H1 (cell line): ENCODE measurements at regions of chr2 and their contacts with region 1.

Region 1: DNA sequence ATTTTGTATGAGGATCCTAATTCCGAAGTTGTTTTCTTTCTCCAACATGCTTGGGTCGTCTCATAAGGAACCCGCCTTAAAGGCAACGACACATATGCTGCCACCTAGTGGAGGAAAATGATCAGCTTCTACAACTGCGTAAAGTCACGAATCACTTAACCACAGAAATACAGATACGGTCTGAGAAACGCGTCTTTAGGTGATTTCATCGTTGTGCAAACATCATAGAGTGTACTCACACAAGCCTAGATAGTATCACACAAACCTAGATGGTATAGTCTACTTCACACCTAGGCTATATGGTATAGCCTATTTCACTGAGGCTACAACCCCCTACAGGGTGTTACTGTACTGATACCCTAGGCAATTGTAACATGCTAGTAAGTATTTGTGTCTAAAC is 13.1 kb downstream of the GNLY start:
- DNase-seq: no peak
- H3K4me3 ChIP-seq: no peak overlapping the region
- H3K27ac ChIP-seq: no peak overlapping the region
- H3K4me1 ChIP-seq: peaks cover 0 to 4% (median 1%) of the 10 kb centered on the region in 4 experiments; a peak in 3 of 7 replicates
- H3K27me3 ChIP-seq: no peaks in the 10 kb centered on the region; a peak in 1 of 7 replicates
- CTCF ChIP-seq: peak; percentile 0 to 94 (median 72)
- EP300 ChIP-seq: no peak
- POLR2A ChIP-seq: no peak
- RAD21 ChIP-seq: peak; percentile 65 to 72

Region 2: GRCh38 chr2:85561317-85561979 is 145.9 kb before region 1 on chr2 and contains the start of gene GGCX:
- CTCF ChIA-PET with region 1: no interaction called
- POLR2A ChIA-PET with region 1: no interaction called
- DNase-seq: peak; percentile 88 to 97
- H3K4me3 ChIP-seq: peak within 1 kb of the TSS; percentile 68 to 90 (median 88)
- H3K27ac ChIP-seq: peak within 1 kb of the TSS; percentile 92
- H3K4me1 ChIP-seq: no peaks in the 10 kb centered on the region
- H3K27me3 ChIP-seq: no peaks in the 10 kb centered on the region
- CTCF ChIP-seq: no peak
- EP300 ChIP-seq: no peak
- POLR2A ChIP-seq: peak; percentile 95 to 97
- RAD21 ChIP-seq: peak in 1 of 2 experiments; percentile 11; a peak in 1 of 4 replicates
- total RNA-seq, gene GGCX: 33.8 and 36.1 TPM in 2 replicates

Region 3: GRCh38 chr2:85635636-85636035 is 71.7 kb before region 1 on chr2:
- CTCF ChIA-PET with region 1: interaction called, 24 read pairs
- POLR2A ChIA-PET with region 1: interaction called, 3 read pairs
- DNase-seq: no peak
- H3K4me3 ChIP-seq: no peak overlapping the region
- H3K27ac ChIP-seq: no peak overlapping the region
- H3K4me1 ChIP-seq: no peaks in the 10 kb centered on the region
- H3K27me3 ChIP-seq: no peaks in the 10 kb centered on the region
- CTCF ChIP-seq: no peak
- EP300 ChIP-seq: no peak
- POLR2A ChIP-seq: no peak
- RAD21 ChIP-seq: no peak

Region 4: DNA sequence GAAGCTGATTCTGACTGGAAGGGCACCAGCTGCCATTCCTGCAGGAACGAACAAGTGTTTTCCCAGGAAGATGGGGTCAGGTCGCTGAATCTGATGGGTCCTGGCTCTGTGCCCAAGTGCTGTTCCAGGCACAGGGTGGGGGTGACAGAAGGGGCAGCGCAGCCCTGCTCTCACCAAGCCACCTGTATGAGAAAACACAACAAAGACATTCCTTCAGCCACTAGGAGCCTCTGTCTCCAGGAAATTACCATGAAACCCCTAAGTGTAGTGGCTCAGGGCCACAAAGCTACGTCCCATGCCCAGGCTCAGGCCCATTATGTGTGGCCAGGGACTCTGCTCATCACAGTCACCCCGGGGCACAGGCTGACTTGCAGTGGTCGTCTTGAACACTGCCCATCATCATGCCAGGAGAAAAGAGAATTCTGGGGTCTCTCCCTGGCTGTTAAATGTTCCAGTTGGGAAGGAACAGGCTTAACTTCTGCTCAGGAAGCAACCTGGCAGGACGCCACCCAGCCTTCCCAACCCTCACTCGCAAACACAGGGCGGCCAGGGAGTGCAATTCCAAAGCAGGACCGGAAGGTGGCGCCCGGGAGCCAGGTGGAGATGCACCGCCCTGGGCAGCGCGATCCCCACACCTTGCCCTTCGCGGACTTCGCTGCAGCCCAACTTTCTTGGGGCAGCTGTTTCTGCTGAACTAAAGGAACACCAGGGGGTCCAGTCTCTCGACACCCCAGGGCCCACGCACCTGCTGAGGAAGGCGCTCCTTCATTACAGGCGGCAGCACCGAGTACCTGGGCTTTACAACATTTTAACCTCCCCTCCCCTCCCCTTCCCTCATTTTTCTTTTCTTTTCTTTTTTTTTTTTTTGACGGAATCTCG is 28.3 kb before region 1 on chr2:
- CTCF ChIA-PET with region 1: interaction called, 80 read pairs
- POLR2A ChIA-PET with region 1: interaction called, 10 read pairs
- DNase-seq: peak; percentile 38 to 97
- H3K4me3 ChIP-seq: peak overlapping the region in 1 of 4 experiments; percentile 45; a peak in 1 of 8 replicates
- H3K27ac ChIP-seq: no peak overlapping the region
- H3K4me1 ChIP-seq: peaks cover 0 to 7% (median 1%) of the 10 kb centered on the region in 4 experiments; a peak in 1 of 7 replicates
- H3K27me3 ChIP-seq: no peaks in the 10 kb centered on the region; a peak in 1 of 7 replicates
- CTCF ChIP-seq: peak; percentile 95 to 99 (median 98)
- EP300 ChIP-seq: no peak
- POLR2A ChIP-seq: no peak
- RAD21 ChIP-seq: peak; percentile 86 to 90

Region 5: DNA sequence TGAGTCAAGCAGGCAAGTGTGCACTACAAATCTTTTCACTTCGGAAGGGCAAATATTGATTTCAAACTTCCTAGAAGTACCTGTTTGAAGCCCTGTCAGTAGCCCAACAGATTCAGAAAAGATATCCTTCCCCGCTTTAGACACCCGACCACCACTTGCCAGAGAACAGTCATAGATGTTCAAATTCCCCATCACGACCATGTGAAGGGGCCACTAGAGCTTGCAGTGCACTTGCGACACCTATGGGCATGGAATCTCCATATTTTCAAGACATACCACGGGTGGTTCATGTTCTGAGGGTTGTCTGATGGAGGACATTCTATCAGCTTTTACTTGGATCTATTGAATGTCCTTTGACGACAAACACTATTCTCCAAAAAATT is 10.7 kb after region 1 on chr2:
- CTCF ChIA-PET with region 1: interaction called, 61 read pairs
- POLR2A ChIA-PET with region 1: interaction called, 5 read pairs
- DNase-seq: no peak
- H3K4me3 ChIP-seq: no peak overlapping the region
- H3K27ac ChIP-seq: no peak overlapping the region
- H3K4me1 ChIP-seq: no peaks in the 10 kb centered on the region
- H3K27me3 ChIP-seq: no peaks in the 10 kb centered on the region; a peak in 1 of 7 replicates
- CTCF ChIP-seq: no peak
- EP300 ChIP-seq: no peak
- POLR2A ChIP-seq: no peak
- RAD21 ChIP-seq: peak in 1 of 2 experiments; percentile 23; a peak in 2 of 4 replicates

Region 6: GRCh38 chr2:85741833-85742455 is 34.6 kb after region 1 on chr2:
- CTCF ChIA-PET with region 1: interaction called, 18 read pairs
- POLR2A ChIA-PET with region 1: interaction called, 3 read pairs
- DNase-seq: no peak
- H3K4me3 ChIP-seq: no peak overlapping the region
- H3K27ac ChIP-seq: no peak overlapping the region
- H3K4me1 ChIP-seq: peaks cover 0 to 7% (median 4%) of the 10 kb centered on the region in 4 experiments; a peak in 2 of 7 replicates
- H3K27me3 ChIP-seq: peaks cover 0 to 3% (median 2%) of the 10 kb centered on the region in 4 experiments; a peak in 3 of 7 replicates
- CTCF ChIP-seq: no peak
- EP300 ChIP-seq: no peak
- POLR2A ChIP-seq: no peak
- RAD21 ChIP-seq: no peak

Region 7: GRCh38 chr2:85911814-85912692 is 204.7 kb after region 1 on chr2:
- CTCF ChIA-PET with region 1: no interaction called
- POLR2A ChIA-PET with region 1: no interaction called
- DNase-seq: no peak
- H3K4me3 ChIP-seq: no peak overlapping the region
- H3K27ac ChIP-seq: no peak overlapping the region
- H3K4me1 ChIP-seq: no peaks in the 10 kb centered on the region
- H3K27me3 ChIP-seq: no peaks in the 10 kb centered on the region
- CTCF ChIP-seq: no peak
- EP300 ChIP-seq: no peak
- POLR2A ChIP-seq: no peak
- RAD21 ChIP-seq: no peak